IMR-90 (cell line): ENCODE measurements at regions of chr4 and their contacts with region 1.

Region 1: DNA sequence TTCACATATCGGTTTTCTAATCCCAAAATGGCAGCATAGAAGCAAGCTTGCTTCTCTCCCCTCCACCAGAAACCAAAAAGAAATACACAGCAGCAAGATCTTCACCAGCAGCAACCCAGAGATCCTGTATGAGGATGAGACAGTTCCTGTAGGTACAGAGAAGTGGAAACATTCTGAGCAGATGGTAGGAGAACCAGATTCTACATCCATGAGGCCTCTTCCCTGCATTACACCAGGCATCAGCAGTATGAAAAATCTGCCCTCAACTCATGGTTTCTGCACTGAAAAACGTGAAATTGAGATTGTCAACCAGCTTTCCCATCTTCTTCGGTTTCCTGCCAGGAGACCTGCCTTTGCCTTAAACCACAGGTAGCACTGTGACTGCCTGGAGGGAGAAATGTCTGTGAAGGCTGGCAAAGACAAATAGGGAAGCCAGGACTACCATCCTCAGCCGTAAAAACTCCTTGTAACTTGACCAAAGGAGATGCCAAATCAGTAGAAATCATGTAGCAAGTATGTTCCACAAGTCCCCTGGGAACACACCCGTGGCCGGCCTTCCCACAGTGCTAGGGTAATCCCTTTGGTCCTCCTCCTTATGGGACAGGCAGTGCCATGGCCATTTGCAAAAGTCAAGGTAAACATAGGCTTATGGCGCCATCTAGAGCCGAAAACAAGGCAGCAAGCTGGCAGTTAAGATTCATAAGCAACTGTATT is 24.0 kb upstream of the MTHFD2L start:
- DNase-seq: peak; percentile 86
- ATAC-seq: peak; percentile 99
- H3K4me3 ChIP-seq: no peak overlapping the region
- H3K27ac ChIP-seq: no peak overlapping the region
- H3K4me1 ChIP-seq: no peaks in the 10 kb centered on the region
- H3K27me3 ChIP-seq: no peaks in the 10 kb centered on the region; the same call in 1 of the 2 replicates
- CTCF ChIP-seq: peak; percentile 94
- POLR2A ChIP-seq: peak; percentile 65
- RAD21 ChIP-seq: peak; percentile 97

Region 2: DNA sequence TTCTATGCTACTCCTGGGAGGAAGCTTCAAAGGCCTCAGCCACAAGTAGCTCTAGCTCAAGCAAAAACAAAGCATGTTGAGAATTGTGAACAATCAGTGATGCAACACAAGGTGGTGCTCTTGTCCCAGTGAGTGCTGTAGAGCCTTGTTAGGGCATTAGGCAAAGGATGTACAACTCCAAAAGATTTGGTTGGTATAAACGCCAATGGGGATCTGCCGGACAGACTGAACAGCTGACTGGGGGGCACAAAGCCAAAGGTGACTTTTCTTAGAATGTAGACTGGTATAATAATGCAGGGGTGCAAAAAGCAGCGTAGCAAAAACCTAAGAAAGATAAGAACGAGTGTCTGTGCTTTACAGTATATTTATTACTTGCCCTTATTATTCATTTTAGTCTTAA is 792.5 kb before region 1 on chr4:
- CTCF ChIA-PET with region 1: interaction called, 7 read pairs
- POLR2A ChIA-PET with region 1: no interaction called
- dilution Hi-C with region 1: no loop called
- in situ Hi-C with region 1: no loop called
- intact Hi-C with region 1: loop called (anchors 1 kb)
- DNase-seq: peak; percentile 53
- ATAC-seq: peak; percentile 89
- H3K4me3 ChIP-seq: no peak overlapping the region
- H3K27ac ChIP-seq: no peak overlapping the region
- H3K4me1 ChIP-seq: no peaks in the 10 kb centered on the region
- H3K27me3 ChIP-seq: no peaks in the 10 kb centered on the region; the same call in none of the 2 replicates
- CTCF ChIP-seq: peak; percentile 51
- POLR2A ChIP-seq: no peak
- RAD21 ChIP-seq: peak; percentile 70

Region 3: GRCh38 chr4:73593631-73594241 is 540.2 kb before region 1 on chr4:
- CTCF ChIA-PET with region 1: interaction called, 3 read pairs
- POLR2A ChIA-PET with region 1: no interaction called
- dilution Hi-C with region 1: no loop called
- in situ Hi-C with region 1: loop called (anchors 10 kb)
- intact Hi-C with region 1: loop called (anchors 2 kb)
- DNase-seq: peak; percentile 49
- ATAC-seq: 0 out of 2 replicates have a peak, but pooled peaks have one; percentile 43
- H3K4me3 ChIP-seq: no peak overlapping the region
- H3K27ac ChIP-seq: no peak overlapping the region
- H3K4me1 ChIP-seq: peaks cover 2% of the 10 kb centered on the region; the same call in 1 of the 2 replicates
- H3K27me3 ChIP-seq: no peaks in the 10 kb centered on the region
- CTCF ChIP-seq: peak; percentile 62
- POLR2A ChIP-seq: no peak
- RAD21 ChIP-seq: peak; percentile 53

Region 4: GRCh38 chr4:73662709-73663546 is 471.0 kb before region 1 on chr4:
- CTCF ChIA-PET with region 1: interaction called, 12 read pairs
- POLR2A ChIA-PET with region 1: no interaction called
- dilution Hi-C with region 1: no loop called
- in situ Hi-C with region 1: loop called (anchors 5 kb)
- intact Hi-C with region 1: loop called (anchors 1 kb)
- DNase-seq: peak; percentile 77
- ATAC-seq: peak; percentile 64
- H3K4me3 ChIP-seq: no peak overlapping the region
- H3K27ac ChIP-seq: no peak overlapping the region; the same call in 1 of the 2 replicates
- H3K4me1 ChIP-seq: peaks cover 6% of the 10 kb centered on the region
- H3K27me3 ChIP-seq: no peaks in the 10 kb centered on the region
- CTCF ChIP-seq: peak; percentile 72
- POLR2A ChIP-seq: no peak
- RAD21 ChIP-seq: peak; percentile 87

Region 5: GRCh38 chr4:73869130-73870050 is 264.6 kb before region 1 on chr4 and contains the start of gene CXCL1:
- CTCF ChIA-PET with region 1: interaction called, 4 read pairs
- POLR2A ChIA-PET with region 1: no interaction called
- dilution Hi-C with region 1: no loop called
- in situ Hi-C with region 1: no loop called
- intact Hi-C with region 1: loop called (anchors 10 kb)
- DNase-seq: no peak
- ATAC-seq: peak; percentile 87
- H3K4me3 ChIP-seq: peak within 1 kb of the TSS; percentile 55
- H3K27ac ChIP-seq: peak within 1 kb of the TSS; percentile 13; the same call in 1 of the 2 replicates
- H3K4me1 ChIP-seq: peaks cover 3% of the 10 kb centered on the region; the same call in 1 of the 2 replicates
- H3K27me3 ChIP-seq: peaks cover 51% of the 10 kb centered on the region
- CTCF ChIP-seq: 0 out of 2 replicates have a peak, but pooled peaks have one; percentile 10
- POLR2A ChIP-seq: no peak
- RAD21 ChIP-seq: 0 out of 2 replicates have a peak, but pooled peaks have one; percentile 11
- total RNA-seq, gene CXCL1: not detected in 2 replicates

Region 6: GRCh38 chr4:74038161-74039064 is 95.5 kb before region 1 on chr4 and contains the start of gene CXCL3:
- CTCF ChIA-PET with region 1: no interaction called
- POLR2A ChIA-PET with region 1: no interaction called
- dilution Hi-C with region 1: no loop called
- in situ Hi-C with region 1: no loop called
- intact Hi-C with region 1: loop called (anchors 2 kb)
- DNase-seq: peak; percentile 40
- ATAC-seq: peak; percentile 97
- H3K4me3 ChIP-seq: peak within 1 kb of the TSS; percentile 84
- H3K27ac ChIP-seq: peak within 1 kb of the TSS; percentile 53
- H3K4me1 ChIP-seq: peaks cover 2% of the 10 kb centered on the region; the same call in 1 of the 2 replicates
- H3K27me3 ChIP-seq: no peaks in the 10 kb centered on the region
- CTCF ChIP-seq: peak; percentile 48
- POLR2A ChIP-seq: 0 out of 2 replicates have a peak, but pooled peaks have one; percentile 20
- RAD21 ChIP-seq: peak; percentile 31
- total RNA-seq, gene CXCL3: 0.18 TPM in 1 of 2 replicates, not detected in the other